Activated naive CD4-positive, alpha-beta T cell treated with anti-CD3 and anti-CD28 coated beads for 36 hours (primary cell): ENCODE measurements at regions of chr21 and their contacts with region 1.

Region 1: GRCh38 chr21:45596704-45597318 is 46.7 kb upstream of the PCBP3 start:
- DNase-seq: peak; percentile 92
- H3K4me3 Mint-ChIP-seq: no peak overlapping the region
- H3K27ac Mint-ChIP-seq: no peak overlapping the region
- H3K4me1 Mint-ChIP-seq: peaks cover 28% of the 10 kb centered on the region
- H3K27me3 Mint-ChIP-seq: no peaks in the 10 kb centered on the region

Region 2: GRCh38 chr21:45409466-45410150 is 187.2 kb before region 1 on chr21:
- CTCF ChIA-PET with region 1: no interaction called
- intact Hi-C with region 1: no loop called
- DNase-seq: no peak
- H3K4me3 Mint-ChIP-seq: no peak overlapping the region
- H3K27ac Mint-ChIP-seq: no peak overlapping the region
- H3K4me1 Mint-ChIP-seq: peaks cover 10% of the 10 kb centered on the region
- H3K27me3 Mint-ChIP-seq: peaks cover 17% of the 10 kb centered on the region

Region 3: DNA sequence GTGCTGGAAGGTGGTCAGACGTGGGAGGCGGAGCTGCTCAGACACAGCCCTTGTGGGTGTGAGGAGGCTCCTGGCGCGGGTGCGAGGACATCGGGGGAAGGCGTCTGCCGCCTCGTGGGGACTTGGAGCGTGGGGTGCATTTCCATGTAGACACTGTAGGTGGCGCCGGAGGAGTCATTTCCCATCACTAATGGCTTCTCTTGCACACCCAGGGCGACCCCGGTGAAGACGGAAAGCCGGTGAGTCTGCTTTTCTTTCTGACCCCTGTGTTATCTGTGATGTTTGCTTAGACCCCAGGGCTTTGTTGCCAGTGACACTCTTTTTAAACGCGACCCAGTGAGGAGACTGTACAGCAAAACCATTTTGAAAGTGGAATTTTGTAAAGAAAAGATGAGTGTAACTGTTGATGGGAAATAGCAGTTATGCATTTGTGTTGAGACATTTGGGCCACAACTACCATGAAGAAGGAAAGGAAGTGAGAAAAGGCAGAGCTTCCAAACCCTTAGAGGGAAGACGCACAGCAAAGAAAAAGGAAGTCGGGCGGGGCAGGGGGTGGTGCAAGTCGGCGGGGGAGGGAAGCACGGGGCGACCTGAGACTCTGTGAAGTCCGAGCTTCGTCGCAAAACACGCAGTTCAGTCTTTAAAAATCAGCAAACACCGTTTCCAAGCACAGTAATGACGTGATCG is 118.6 kb before region 1 on chr21:
- CTCF ChIA-PET with region 1: interaction called, 3 read pairs
- intact Hi-C with region 1: loop called (anchors 1 kb)
- DNase-seq: peak; percentile 90
- H3K4me3 Mint-ChIP-seq: peak overlapping the region; percentile 71
- H3K27ac Mint-ChIP-seq: peak overlapping the region; percentile 94
- H3K4me1 Mint-ChIP-seq: peaks cover 30% of the 10 kb centered on the region
- H3K27me3 Mint-ChIP-seq: no peaks in the 10 kb centered on the region

Region 4: GRCh38 chr21:45562965-45563364 is 33.8 kb before region 1 on chr21:
- CTCF ChIA-PET with region 1: interaction called, 16 read pairs
- intact Hi-C with region 1: no loop called
- DNase-seq: no peak
- H3K4me3 Mint-ChIP-seq: no peak overlapping the region
- H3K27ac Mint-ChIP-seq: no peak overlapping the region
- H3K4me1 Mint-ChIP-seq: no peaks in the 10 kb centered on the region
- H3K27me3 Mint-ChIP-seq: peaks cover 6% of the 10 kb centered on the region